Heart right ventricle (tissue), 16 donors: ENCODE measurements at regions of chr11 and their contacts with region 1.

Region 1: GRCh38 chr11:8263769-8264410 is at the start of gene LMO1:
- DNase-seq: peak; percentile 82 to 84
- ATAC-seq: peak; percentile 56 to 89 (median 82)
- H3K4me3 ChIP-seq: peak within 1 kb of the TSS; percentile 25 to 72 (median 53)
- H3K27ac ChIP-seq: peak within 1 kb of the TSS in 3 of 10 donors; percentile 25 to 71 (median 35)
- H3K4me1 ChIP-seq: peaks cover 1 to 37% (median 23%) of the 10 kb centered on the region in 9 donors
- H3K27me3 ChIP-seq: peaks cover 13 to 86% (median 70%) of the 10 kb centered on the region in 7 donors
- CTCF ChIP-seq: peak; percentile 79 to 93 (median 88)
- total RNA-seq, gene LMO1: 0.61 to 6.6 (median 2.4) TPM

Region 2: GRCh38 chr11:8192016-8192895 is 71.6 kb before region 1 on chr11:
- intact Hi-C with region 1: loop called in 1 of 10 experiments (anchors 2 kb)
- DNase-seq: peak; percentile 46 to 63
- ATAC-seq: peak; percentile 46 to 87 (median 79)
- H3K4me3 ChIP-seq: no peak overlapping the region
- H3K27ac ChIP-seq: no peak overlapping the region
- H3K4me1 ChIP-seq: peaks cover 0 to 3% (median 0%) of the 10 kb centered on the region in 9 donors
- H3K27me3 ChIP-seq: peaks cover 0 to 30% (median 9%) of the 10 kb centered on the region in 7 donors
- CTCF ChIP-seq: peak; percentile 63 to 91 (median 85)

Region 3: GRCh38 chr11:8219257-8220021 is 44.5 kb before region 1 on chr11:
- intact Hi-C with region 1: loop called in 4 of 10 experiments (anchors 2 to 5 kb)
- DNase-seq: no peak
- ATAC-seq: peak in 6 of 8 donors; percentile 20 to 64 (median 50)
- H3K4me3 ChIP-seq: no peak overlapping the region
- H3K27ac ChIP-seq: no peak overlapping the region
- H3K4me1 ChIP-seq: no peaks in the 10 kb centered on the region
- H3K27me3 ChIP-seq: peaks cover 0 to 4% (median 0%) of the 10 kb centered on the region in 7 donors
- CTCF ChIP-seq: peak; percentile 24 to 71 (median 64)

Region 4: DNA sequence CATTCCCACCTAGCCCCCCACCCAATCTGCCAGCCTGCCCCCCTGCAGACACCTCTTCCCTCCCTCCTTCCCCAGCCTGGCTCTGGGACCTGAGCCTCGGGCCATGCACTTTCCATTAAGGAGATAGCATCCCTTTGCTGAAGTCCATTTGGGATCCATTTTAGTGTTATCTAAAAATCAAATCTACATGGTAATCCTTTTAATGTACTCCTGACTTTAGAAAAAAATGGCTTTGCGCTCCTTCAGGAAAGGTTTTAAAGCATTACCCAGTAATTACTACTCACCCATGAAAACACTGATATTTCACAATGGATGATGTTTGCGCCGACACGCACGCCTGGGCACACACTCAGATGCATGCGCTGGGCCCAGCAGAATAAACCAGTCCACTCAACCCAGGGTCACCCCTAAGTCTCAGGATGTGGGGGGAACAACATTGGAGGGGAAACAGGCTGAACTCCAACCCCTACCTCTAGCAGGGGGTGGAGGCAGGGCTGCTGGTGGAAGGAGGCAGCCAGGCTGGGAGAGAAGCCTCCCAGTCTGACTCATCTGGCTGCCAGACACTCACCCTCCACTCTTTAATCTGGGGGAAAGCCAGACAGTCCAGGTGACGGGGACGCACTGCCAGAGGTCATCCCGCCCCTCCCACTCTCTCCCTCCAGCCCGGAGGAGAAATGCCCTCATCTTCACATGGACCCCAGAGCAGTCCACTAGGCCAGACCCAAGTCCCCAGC is 30.0 kb before region 1 on chr11:
- intact Hi-C with region 1: loop called in 5 of 10 experiments (anchors 2 to 5 kb)
- DNase-seq: peak; percentile 14 to 25
- ATAC-seq: peak; percentile 17 to 87 (median 72)
- H3K4me3 ChIP-seq: no peak overlapping the region
- H3K27ac ChIP-seq: peak overlapping the region in 3 of 10 donors; percentile 22 to 80 (median 58)
- H3K4me1 ChIP-seq: peaks cover 0 to 46% (median 6%) of the 10 kb centered on the region in 9 donors
- H3K27me3 ChIP-seq: peaks cover 0 to 5% (median 0%) of the 10 kb centered on the region in 7 donors
- CTCF ChIP-seq: no peak